Panc1 (cell line): ENCODE measurements at regions of chr11 and their contacts with region 1.

Region 1: GRCh38 chr11:38680746-38681145 is 2082.7 kb upstream of the RAG2 start:
- DNase-seq: no peak
- ATAC-seq: no peak
- H3K4me3 ChIP-seq: no peak overlapping the region
- H3K27ac ChIP-seq: no peak overlapping the region
- H3K4me1 ChIP-seq: no peaks in the 10 kb centered on the region
- H3K27me3 ChIP-seq: no peaks in the 10 kb centered on the region
- CTCF ChIP-seq: no peak

Region 2: DNA sequence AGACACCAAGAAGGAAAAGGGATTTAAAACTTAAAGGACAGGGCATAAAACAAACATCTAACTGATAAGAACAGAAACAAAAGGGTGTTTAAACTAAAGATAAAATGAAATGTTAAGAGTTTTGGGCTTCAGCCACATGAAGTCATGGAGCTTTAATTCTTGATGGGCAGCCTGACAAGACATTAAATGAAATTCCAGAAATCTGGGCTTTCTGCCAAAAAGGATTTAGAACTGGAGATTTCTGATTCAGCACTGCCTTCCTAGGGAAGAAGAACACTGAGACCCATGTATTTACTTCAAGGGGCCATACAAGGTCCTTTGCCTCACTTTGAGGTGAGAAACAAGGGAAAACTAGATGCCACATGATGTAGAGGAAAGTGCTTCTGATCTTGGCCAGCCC is 1726.8 kb before region 1 on chr11:
- CTCF ChIA-PET with region 1: no interaction called
- POLR2A ChIA-PET with region 1: no interaction called
- in situ Hi-C with region 1: no loop called
- intact Hi-C with region 1: loop called (anchors 5 kb)
- DNase-seq: no peak
- ATAC-seq: no peak
- H3K4me3 ChIP-seq: no peak overlapping the region
- H3K27ac ChIP-seq: no peak overlapping the region
- H3K4me1 ChIP-seq: no peaks in the 10 kb centered on the region
- H3K27me3 ChIP-seq: no peaks in the 10 kb centered on the region
- CTCF ChIP-seq: no peak